Psoas muscle (tissue), 8 donors: ENCODE measurements at regions of chr19 and their contacts with region 1.

Region 1: DNA sequence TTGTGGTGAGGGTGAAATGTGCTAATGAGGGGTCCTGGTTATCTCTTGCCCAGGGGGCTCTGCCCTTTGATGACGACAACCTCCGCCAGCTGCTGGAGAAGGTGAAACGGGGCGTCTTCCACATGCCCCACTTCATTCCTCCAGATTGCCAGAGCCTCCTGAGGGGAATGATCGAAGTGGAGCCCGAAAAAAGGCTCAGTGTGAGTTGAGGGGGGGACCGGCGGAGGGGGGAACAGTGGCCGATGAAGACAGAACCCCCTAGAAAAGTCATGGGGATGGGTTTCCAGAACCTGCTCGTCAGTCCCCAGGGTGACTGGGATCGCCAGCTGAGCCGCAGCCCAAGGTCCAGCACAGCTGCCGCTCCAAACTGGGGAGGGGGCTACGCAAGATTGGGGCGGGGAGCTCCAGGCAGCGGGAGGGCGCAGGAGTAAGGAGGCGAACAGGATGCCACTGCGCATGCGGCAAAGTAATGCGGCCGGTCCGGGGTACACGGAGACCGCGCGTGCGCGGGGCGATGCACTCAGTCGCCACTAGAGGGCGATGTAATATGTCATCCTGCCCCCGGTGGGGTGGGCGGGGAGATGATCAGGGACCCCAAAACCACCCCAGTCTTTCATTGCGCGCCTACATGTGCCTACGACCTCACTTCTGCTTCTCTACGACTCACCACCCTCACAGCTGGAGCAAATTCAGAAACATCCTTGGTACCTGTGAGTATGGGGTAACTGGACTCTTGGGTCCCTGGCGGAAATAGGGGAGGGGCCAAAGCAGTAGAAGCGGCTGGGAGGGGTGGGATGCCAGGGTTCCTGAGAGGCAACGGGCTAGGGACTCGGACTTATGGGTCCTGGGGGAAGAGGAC is 17.9 kb downstream of the BRSK1 start:
- DNase-seq: peak; percentile 88 to 93
- ATAC-seq: peak; percentile 86 to 91 (median 90)
- H3K4me3 ChIP-seq: peak overlapping the region; percentile 65
- H3K27ac ChIP-seq: no peak overlapping the region
- H3K4me1 ChIP-seq: no peaks in the 10 kb centered on the region
- H3K27me3 ChIP-seq: no peaks in the 10 kb centered on the region
- CTCF ChIP-seq: peak; percentile 95

Region 2: DNA sequence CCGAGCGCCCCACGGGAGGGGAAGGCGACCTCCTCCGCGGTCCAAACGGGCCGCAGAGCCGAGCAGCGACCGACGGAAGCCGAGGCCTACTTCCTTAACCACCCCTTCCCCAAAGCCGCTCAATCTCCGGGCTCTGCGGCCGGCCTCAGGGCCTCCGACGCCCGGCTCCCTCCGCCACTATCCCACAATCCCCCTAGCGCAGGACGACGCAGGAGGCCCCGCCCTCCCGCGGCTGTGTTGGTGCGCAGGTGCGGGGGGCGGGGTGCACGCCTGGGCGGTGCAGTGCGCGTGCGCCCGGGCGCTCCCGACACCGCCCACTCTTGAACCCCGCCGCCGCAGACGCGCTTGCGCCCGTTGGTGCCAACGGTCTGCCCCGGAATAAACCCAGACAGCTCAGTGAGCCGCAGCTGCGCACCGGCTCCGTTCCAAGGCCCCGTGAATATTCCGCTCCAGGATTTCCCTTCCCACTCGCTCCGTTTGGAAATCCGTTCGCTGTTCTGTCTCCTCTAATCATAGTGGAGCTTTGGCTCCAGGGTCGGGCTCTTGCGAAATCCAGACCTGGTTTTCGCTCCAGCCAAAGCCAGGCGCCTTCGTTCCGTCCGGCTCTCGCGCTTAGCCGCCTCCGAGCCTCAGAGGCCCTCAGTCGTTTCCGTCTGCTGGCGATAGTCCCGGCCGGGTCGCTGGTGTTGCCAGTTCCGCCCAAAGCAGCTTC is 42.7 kb before region 1 on chr19 and contains the start of gene PPP6R1:
- intact Hi-C with region 1: no loop called
- DNase-seq: peak; percentile 98 to 99
- ATAC-seq: peak; percentile 95 to 96 (median 96)
- H3K4me3 ChIP-seq: peak within 1 kb of the TSS; percentile 92
- H3K27ac ChIP-seq: peak within 1 kb of the TSS; percentile 92
- H3K4me1 ChIP-seq: peaks cover 45% of the 10 kb centered on the region
- H3K27me3 ChIP-seq: no peaks in the 10 kb centered on the region
- CTCF ChIP-seq: no peak
- total RNA-seq, gene PPP6R1: 38.1 to 51.8 (median 43.9) TPM

Region 3: GRCh38 chr19:55270172-55270942 is 31.3 kb before region 1 on chr19:
- intact Hi-C with region 1: no loop called
- DNase-seq: no peak
- ATAC-seq: no peak
- H3K4me3 ChIP-seq: no peak overlapping the region
- H3K27ac ChIP-seq: no peak overlapping the region
- H3K4me1 ChIP-seq: no peaks in the 10 kb centered on the region
- H3K27me3 ChIP-seq: no peaks in the 10 kb centered on the region
- CTCF ChIP-seq: no peak

Region 4: GRCh38 chr19:55339048-55339888 is 37.6 kb after region 1 on chr19 and contains the start of gene KMT5C:
- intact Hi-C with region 1: loop called (anchors 5 kb)
- DNase-seq: peak; percentile 100
- ATAC-seq: peak; percentile 91 to 93 (median 92)
- H3K4me3 ChIP-seq: peak within 1 kb of the TSS; percentile 75
- H3K27ac ChIP-seq: peak within 1 kb of the TSS; percentile 93
- H3K4me1 ChIP-seq: peaks cover 12% of the 10 kb centered on the region
- H3K27me3 ChIP-seq: peaks cover 0 to 18% (median 0%) of the 10 kb centered on the region in 3 donors
- CTCF ChIP-seq: peak; percentile 41
- total RNA-seq, gene KMT5C: 3.9 to 5.7 (median 4.6) TPM

Region 5: GRCh38 chr19:55418185-55418584 is 116.5 kb after region 1 on chr19:
- intact Hi-C with region 1: loop called in 1 of 2 experiments (anchors 5 kb)
- DNase-seq: no peak
- ATAC-seq: peak; percentile 58 to 80 (median 64)
- H3K4me3 ChIP-seq: no peak overlapping the region
- H3K27ac ChIP-seq: no peak overlapping the region
- H3K4me1 ChIP-seq: no peaks in the 10 kb centered on the region
- H3K27me3 ChIP-seq: peaks cover 0 to 16% (median 3%) of the 10 kb centered on the region in 3 donors
- CTCF ChIP-seq: peak; percentile 56

Region 6: DNA sequence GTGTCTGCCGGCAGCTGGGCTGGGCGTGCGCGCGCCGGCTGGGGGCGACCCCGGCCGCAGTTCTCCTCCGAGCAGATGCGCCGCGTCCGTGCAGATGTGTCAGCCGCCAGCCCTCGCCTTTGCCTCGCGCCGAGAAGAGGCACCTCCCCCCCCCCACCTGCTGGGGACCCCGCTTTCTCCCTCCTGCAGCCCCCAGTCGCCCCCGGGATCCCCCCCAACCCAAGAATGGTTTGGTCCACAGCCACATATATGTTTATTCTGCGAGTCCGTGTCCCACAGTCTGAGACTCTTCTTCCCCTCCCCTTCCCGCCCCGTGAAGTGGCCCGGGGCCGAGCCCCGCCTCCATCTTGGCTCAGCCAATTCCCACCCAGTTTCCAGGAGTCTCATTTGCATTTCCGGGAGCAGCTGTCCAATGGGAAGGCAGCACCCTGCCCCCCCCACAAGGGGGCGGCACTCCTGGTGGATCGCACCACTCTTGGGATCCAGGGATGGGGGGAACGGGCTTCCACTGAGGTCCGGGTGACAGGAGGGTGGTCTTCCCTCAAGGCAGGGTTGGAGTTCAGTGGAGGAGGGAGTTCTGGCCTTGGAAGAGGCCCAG is 151.2 kb after region 1 on chr19:
- intact Hi-C with region 1: loop called in 1 of 2 experiments (anchors 5 kb)
- DNase-seq: peak; percentile 76 to 90
- ATAC-seq: peak; percentile 80 to 96 (median 91)
- H3K4me3 ChIP-seq: no peak overlapping the region
- H3K27ac ChIP-seq: no peak overlapping the region
- H3K4me1 ChIP-seq: peaks cover 6% of the 10 kb centered on the region
- H3K27me3 ChIP-seq: peaks cover 0 to 24% (median 24%) of the 10 kb centered on the region in 3 donors
- CTCF ChIP-seq: no peak